Posterior vena cava (tissue), 2 donors: ENCODE measurements at regions of chr7 and their contacts with region 1.

Region 1: DNA sequence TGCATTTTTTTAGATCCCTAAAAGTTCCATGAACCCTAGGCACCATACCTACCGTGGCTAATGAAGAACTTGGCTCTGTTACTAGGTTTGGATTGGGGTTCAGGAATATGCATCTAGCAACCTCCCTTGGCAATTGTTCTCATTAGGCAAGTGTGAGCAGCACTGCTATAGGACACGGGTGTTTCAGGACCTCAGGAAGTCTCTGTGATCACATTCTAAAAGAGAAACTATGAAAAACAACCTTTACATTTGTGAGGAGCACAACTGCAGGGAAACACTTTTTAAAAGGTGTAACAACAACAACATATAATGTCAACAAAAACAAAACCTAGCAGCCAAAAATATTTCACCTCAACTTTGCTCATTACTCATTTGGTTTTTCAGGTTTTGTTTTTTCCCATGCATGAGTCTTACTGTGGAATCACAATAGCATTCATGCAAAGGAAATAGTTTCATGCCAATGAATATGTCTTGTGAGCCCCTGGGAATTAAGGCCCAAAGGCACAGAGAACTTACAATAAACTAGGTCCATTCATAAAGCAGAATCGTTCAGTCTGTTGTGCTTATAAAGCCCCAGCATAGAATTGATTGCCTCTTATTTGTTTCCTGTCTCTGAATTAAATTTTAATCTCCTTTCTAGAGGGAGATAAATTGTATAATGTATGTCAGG is 255.7 kb upstream of the DGKB start:
- DNase-seq: no peak

Region 2: DNA sequence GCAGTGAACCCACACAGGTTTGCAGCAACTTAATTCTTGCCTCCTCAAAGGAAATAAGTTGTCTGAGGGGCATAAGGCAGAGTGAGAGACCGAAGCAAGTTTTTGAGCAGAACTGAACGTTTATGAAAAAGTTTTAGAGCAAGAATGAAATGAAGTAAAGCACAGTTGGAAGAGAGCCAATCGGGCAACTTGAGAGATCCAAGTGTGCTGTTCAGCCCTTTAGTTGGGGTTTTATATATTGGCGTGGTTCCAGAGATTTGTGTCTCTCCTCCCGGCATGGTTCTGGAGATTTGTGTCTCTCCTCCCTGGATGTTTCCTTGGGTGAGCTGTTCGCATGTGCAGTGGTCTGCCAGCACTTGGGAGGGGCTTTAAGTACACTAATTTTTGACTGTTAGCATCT is 114.3 kb before region 1 on chr7:
- intact Hi-C with region 1: no loop called
- DNase-seq: no peak

Region 3: GRCh38 chr7:15209429-15209828 is 51.2 kb after region 1 on chr7:
- intact Hi-C with region 1: loop called in 1 of 2 experiments (anchors 5 kb)
- DNase-seq: no peak